K562 (cell line): ENCODE measurements at regions of chr5 and their contacts with region 1.

Region 1: GRCh38 chr5:134917070-134917815 is 12.3 kb downstream of the PCBD2 start:
- DNase-seq: peak; percentile 9 to 33 (median 25)
- ATAC-seq: peak; percentile 70
- H3K4me3 ChIP-seq: no peak overlapping the region
- H3K27ac ChIP-seq: no peak overlapping the region
- H3K4me1 ChIP-seq: no peaks in the 10 kb centered on the region; a peak in 2 of 5 replicates
- H3K27me3 ChIP-seq: no peaks in the 10 kb centered on the region
- CTCF ChIP-seq: peak; percentile 40 to 52 (median 46); a peak in 5 of 6 replicates
- EP300 ChIP-seq: no peak
- POLR2A ChIP-seq: no peak
- RAD21 ChIP-seq: peak; percentile 13 to 43; a peak in 3 of 4 replicates

Region 2: GRCh38 chr5:134825212-134825611 is 92.0 kb before region 1 on chr5:
- CTCF ChIA-PET with region 1: no interaction called
- POLR2A ChIA-PET with region 1: no interaction called
- in situ Hi-C with region 1: no loop called
- intact Hi-C with region 1: no loop called
- DNase-seq: no peak
- ATAC-seq: no peak
- H3K4me3 ChIP-seq: no peak overlapping the region
- H3K27ac ChIP-seq: no peak overlapping the region
- H3K4me1 ChIP-seq: no peaks in the 10 kb centered on the region
- H3K27me3 ChIP-seq: no peaks in the 10 kb centered on the region
- CTCF ChIP-seq: no peak
- EP300 ChIP-seq: no peak
- POLR2A ChIP-seq: no peak
- RAD21 ChIP-seq: no peak

Region 3: GRCh38 chr5:135016861-135017290 is 99.6 kb after region 1 on chr5:
- CTCF ChIA-PET with region 1: no interaction called
- POLR2A ChIA-PET with region 1: no interaction called
- in situ Hi-C with region 1: no loop called
- intact Hi-C with region 1: no loop called
- DNase-seq: no peak
- ATAC-seq: no peak
- H3K4me3 ChIP-seq: no peak overlapping the region
- H3K27ac ChIP-seq: no peak overlapping the region
- H3K4me1 ChIP-seq: peaks cover 3 to 8% of the 10 kb centered on the region in 2 experiments; a peak in 3 of 5 replicates
- H3K27me3 ChIP-seq: no peaks in the 10 kb centered on the region
- CTCF ChIP-seq: no peak
- EP300 ChIP-seq: no peak
- POLR2A ChIP-seq: no peak
- RAD21 ChIP-seq: no peak

Region 4: GRCh38 chr5:135185481-135186065 is 268.3 kb after region 1 on chr5:
- CTCF ChIA-PET with region 1: no interaction called
- POLR2A ChIA-PET with region 1: no interaction called
- in situ Hi-C with region 1: no loop called
- intact Hi-C with region 1: loop called (anchors 5 kb)
- DNase-seq: no peak
- ATAC-seq: no peak
- H3K4me3 ChIP-seq: no peak overlapping the region
- H3K27ac ChIP-seq: no peak overlapping the region
- H3K4me1 ChIP-seq: peaks cover 10 to 15% of the 10 kb centered on the region in 2 experiments; a peak in 4 of 5 replicates
- H3K27me3 ChIP-seq: no peaks in the 10 kb centered on the region
- CTCF ChIP-seq: no peak
- EP300 ChIP-seq: no peak
- POLR2A ChIP-seq: no peak
- RAD21 ChIP-seq: no peak

Region 5: GRCh38 chr5:135560858-135561257 is 643.6 kb after region 1 on chr5:
- CTCF ChIA-PET with region 1: no interaction called
- POLR2A ChIA-PET with region 1: no interaction called
- in situ Hi-C with region 1: no loop called
- intact Hi-C with region 1: no loop called
- DNase-seq: peak; percentile 80 to 85 (median 80)
- ATAC-seq: peak; percentile 99
- H3K4me3 ChIP-seq: no peak overlapping the region
- H3K27ac ChIP-seq: no peak overlapping the region
- H3K4me1 ChIP-seq: peaks cover 0 to 3% of the 10 kb centered on the region in 2 experiments; a peak in 2 of 5 replicates
- H3K27me3 ChIP-seq: peaks cover 3 to 5% of the 10 kb centered on the region in 2 experiments; a peak in 2 of 5 replicates
- CTCF ChIP-seq: peak; percentile 89 to 94 (median 93)
- EP300 ChIP-seq: no peak
- POLR2A ChIP-seq: no peak
- RAD21 ChIP-seq: peak; percentile 71 to 91